GM12878 (cell line): ENCODE measurements at regions of chr12 and their contacts with region 1.

Region 1: DNA sequence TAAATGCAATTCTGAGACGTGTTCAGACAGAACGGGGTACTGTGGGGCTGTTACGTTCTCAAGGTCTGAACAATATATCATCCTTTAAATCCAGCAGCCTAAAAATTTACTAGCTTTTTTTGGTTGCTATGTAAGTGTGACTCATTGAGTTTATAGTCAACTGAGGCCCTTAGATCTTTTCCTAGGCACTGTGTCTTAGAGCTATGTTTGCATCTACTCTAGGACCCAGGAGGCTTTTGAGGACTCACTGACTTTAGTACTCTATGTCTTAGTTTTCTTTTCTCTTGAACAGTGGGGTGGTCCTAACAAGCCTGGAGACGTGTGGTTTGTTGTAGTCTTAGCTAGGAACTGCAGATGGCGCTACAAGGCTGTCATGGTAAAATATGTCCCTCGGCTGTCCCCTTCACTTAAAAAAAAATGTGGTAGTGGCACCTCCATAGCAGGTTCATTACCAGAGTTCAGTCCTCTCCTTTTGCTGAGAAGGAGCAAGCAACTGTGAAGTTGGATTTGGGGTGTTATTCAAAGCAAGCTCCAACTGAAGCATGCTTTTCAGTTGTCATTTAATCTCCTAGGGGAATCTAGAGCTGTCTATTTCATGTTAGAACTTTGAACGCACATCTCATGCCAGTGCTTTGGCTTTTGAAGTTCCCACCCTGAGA is 8.7 kb upstream of the SPATS2 start:
- DNase-seq: no peak
- ATAC-seq: peak; percentile 99
- H3K4me3 ChIP-seq: no peak overlapping the region
- H3K27ac ChIP-seq: no peak overlapping the region
- H3K4me1 ChIP-seq: no peaks in the 10 kb centered on the region
- H3K27me3 ChIP-seq: no peaks in the 10 kb centered on the region
- CTCF ChIP-seq: peak; percentile 81 to 91 (median 81)
- EP300 ChIP-seq: no peak
- POLR2A ChIP-seq: no peak
- RAD21 ChIP-seq: peak; percentile 98

Region 2: DNA sequence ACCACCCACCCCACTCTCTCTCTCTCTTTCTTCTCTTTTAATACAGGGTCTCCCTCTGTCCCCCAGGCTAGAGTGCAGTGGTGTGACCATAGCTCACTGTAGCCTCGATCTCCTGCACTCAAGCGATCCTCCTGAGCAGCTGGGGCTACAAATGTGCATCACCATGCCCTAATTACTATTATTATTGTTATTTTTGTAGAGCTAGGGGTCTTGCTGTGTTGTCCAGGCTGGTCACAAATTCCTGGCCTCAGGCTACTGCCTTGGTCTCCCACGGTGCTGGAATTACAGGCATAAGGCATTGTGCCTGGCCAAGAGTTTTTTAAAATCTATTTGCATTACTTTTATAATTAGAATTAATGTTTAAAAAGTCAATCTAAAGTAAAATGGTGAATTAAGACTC is 204.4 kb before region 1 on chr12:
- CTCF ChIA-PET with region 1: no interaction called
- POLR2A ChIA-PET with region 1: no interaction called
- RAD21 ChIA-PET with region 1: no interaction called
- SMC1A ChIA-PET with region 1: no interaction called
- in situ Hi-C with region 1: no loop called
- intact Hi-C with region 1: no loop called
- DNase-seq: no peak
- ATAC-seq: no peak
- H3K4me3 ChIP-seq: no peak overlapping the region
- H3K27ac ChIP-seq: no peak overlapping the region
- H3K4me1 ChIP-seq: no peaks in the 10 kb centered on the region
- H3K27me3 ChIP-seq: no peaks in the 10 kb centered on the region
- CTCF ChIP-seq: no peak
- EP300 ChIP-seq: no peak
- POLR2A ChIP-seq: no peak
- RAD21 ChIP-seq: no peak

Region 3: GRCh38 chr12:49304161-49304560 is 54.5 kb before region 1 on chr12:
- CTCF ChIA-PET with region 1: interaction called, 231 read pairs
- POLR2A ChIA-PET with region 1: no interaction called
- RAD21 ChIA-PET with region 1: no interaction called
- SMC1A ChIA-PET with region 1: interaction called, 5 read pairs
- in situ Hi-C with region 1: no loop called
- intact Hi-C with region 1: no loop called
- DNase-seq: no peak
- ATAC-seq: no peak
- H3K4me3 ChIP-seq: no peak overlapping the region
- H3K27ac ChIP-seq: no peak overlapping the region
- H3K4me1 ChIP-seq: no peaks in the 10 kb centered on the region
- H3K27me3 ChIP-seq: no peaks in the 10 kb centered on the region
- CTCF ChIP-seq: no peak
- EP300 ChIP-seq: no peak
- POLR2A ChIP-seq: no peak
- RAD21 ChIP-seq: no peak

Region 4: DNA sequence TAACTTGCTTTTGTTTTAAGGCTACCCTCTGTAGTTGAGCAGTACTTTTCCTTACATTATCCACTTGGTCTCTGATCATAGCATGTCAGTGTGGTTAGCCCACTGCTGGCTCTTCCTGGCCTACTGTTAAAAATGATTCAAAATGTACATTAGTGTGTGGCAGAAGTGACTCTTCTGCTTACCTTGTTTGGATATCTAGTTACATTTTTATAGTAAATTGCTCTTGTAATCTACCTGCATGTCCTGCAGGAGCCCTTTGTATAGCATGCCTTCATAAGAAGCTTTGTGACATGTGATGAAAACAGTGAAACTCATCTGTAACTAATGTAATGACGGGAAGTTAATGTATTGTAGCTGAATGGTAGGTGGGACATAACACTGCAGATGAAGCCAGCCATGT is 16.8 kb after region 1 on chr12:
- CTCF ChIA-PET with region 1: interaction called, 64 read pairs
- POLR2A ChIA-PET with region 1: no interaction called
- RAD21 ChIA-PET with region 1: interaction called, 26 read pairs
- SMC1A ChIA-PET with region 1: interaction called, 9 read pairs
- in situ Hi-C with region 1: no loop called
- intact Hi-C with region 1: no loop called
- DNase-seq: no peak
- ATAC-seq: peak; percentile 62
- H3K4me3 ChIP-seq: no peak overlapping the region
- H3K27ac ChIP-seq: no peak overlapping the region; the same call in 1 of the 2 replicates
- H3K4me1 ChIP-seq: peaks cover 12% of the 10 kb centered on the region
- H3K27me3 ChIP-seq: no peaks in the 10 kb centered on the region
- CTCF ChIP-seq: no peak
- EP300 ChIP-seq: no peak
- POLR2A ChIP-seq: no peak
- RAD21 ChIP-seq: no peak

Region 5: DNA sequence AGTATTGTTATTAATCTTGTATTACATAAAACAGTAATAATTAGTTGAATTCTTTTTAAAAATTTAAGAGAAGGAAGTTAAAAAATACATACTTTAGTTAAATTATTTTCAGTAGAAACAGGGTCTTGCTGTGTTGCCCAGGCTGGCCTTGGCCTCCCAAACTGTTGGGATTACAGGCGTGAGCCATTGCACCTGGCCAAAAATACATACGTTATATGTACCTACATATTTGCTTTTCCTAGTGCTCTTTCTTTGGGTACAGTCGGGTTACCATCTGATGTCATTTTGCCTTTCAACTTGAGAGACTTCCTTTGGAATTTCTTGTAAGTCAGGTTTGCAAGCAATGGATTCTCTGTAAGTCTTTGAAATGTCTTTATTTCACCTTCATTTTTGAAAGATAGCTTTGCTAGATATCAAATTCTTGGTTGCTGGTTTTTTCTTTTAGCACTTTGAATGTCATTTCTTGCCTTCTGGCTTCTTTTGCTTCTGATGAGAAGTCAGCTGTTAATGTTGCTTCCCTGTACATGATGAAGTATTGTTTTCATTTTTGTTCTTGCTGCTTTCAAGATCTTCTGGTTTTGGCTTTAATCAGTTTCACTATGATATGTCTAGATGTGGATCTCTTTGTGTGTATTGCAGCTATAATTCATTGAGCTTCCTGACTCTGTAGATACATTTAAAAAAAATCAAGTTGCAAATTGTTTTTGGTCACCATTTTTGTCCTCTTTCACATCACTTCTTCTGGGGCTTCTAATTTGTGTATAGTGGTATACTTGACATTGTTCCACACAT is 93.1 kb after region 1 on chr12:
- CTCF ChIA-PET with region 1: interaction called, 12 read pairs
- POLR2A ChIA-PET with region 1: no interaction called
- RAD21 ChIA-PET with region 1: interaction called, 4 read pairs
- SMC1A ChIA-PET with region 1: interaction called, 8 read pairs
- in situ Hi-C with region 1: no loop called
- intact Hi-C with region 1: no loop called
- DNase-seq: peak; percentile 62
- ATAC-seq: peak; percentile 96
- H3K4me3 ChIP-seq: no peak overlapping the region
- H3K27ac ChIP-seq: peak overlapping the region; percentile 74
- H3K4me1 ChIP-seq: peaks cover 18% of the 10 kb centered on the region
- H3K27me3 ChIP-seq: no peaks in the 10 kb centered on the region
- CTCF ChIP-seq: no peak
- EP300 ChIP-seq: no peak
- POLR2A ChIP-seq: no peak
- RAD21 ChIP-seq: no peak

Region 6: DNA sequence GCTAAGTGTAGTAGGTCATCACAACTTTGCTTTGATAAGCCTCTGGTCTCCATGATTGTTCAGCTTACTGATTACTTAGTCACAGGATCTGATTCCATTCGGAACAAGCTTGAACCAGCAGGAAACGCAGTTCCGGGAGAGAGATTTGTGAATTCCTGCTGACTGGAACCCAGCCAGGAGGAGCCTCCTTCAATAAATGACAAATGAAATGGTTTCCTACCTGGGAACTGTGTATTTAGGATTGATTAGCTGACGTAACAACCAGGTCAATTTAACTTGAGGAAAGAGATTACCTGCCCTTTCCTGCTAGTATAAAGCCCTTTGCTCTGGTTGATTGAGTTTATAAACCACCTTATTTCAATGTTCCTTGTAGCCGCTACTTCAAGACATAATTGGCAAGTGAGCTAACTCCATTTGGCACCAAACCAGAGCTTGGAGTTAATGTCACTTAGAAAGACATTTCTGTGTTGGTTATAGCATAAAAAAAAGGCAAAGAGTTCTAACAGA is 145.1 kb after region 1 on chr12:
- CTCF ChIA-PET with region 1: interaction called, 39 read pairs
- POLR2A ChIA-PET with region 1: no interaction called
- RAD21 ChIA-PET with region 1: interaction called, 258 read pairs
- SMC1A ChIA-PET with region 1: interaction called, 740 read pairs
- in situ Hi-C with region 1: no loop called
- intact Hi-C with region 1: no loop called
- DNase-seq: no peak
- ATAC-seq: no peak
- H3K4me3 ChIP-seq: no peak overlapping the region
- H3K27ac ChIP-seq: no peak overlapping the region
- H3K4me1 ChIP-seq: peaks cover 11% of the 10 kb centered on the region
- H3K27me3 ChIP-seq: no peaks in the 10 kb centered on the region
- CTCF ChIP-seq: no peak
- EP300 ChIP-seq: no peak
- POLR2A ChIP-seq: no peak
- RAD21 ChIP-seq: no peak

Region 7: DNA sequence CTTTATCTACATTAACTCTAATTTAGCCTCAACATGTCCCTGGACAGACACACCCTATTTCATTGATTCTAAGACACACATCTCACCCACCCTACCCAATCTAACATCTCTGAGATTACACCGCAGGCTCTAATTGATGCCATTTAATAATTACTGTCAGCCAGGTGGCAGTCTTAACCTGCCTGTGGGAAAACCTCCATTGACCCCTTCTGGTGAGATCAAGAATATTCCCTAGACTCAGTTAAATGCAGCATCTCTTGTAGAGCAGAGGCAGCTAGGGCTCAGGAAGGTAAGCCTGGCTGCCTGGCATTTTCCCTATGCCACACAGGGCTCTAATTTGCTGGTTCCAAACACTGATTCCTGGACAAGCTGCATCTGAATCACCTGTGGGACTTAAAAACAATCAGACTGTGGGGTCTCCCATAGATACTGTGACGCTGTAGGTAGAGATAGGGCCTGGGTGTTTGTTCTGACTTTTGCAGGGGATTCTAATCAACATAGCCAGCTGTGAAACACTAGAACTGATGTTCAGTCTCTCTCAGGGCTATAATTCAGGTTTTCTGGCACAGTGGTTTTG is 195.0 kb after region 1 on chr12:
- CTCF ChIA-PET with region 1: interaction called, 67 read pairs
- POLR2A ChIA-PET with region 1: no interaction called
- RAD21 ChIA-PET with region 1: interaction called, 25 read pairs
- SMC1A ChIA-PET with region 1: interaction called, 15 read pairs
- in situ Hi-C with region 1: no loop called
- intact Hi-C with region 1: no loop called
- DNase-seq: no peak
- ATAC-seq: peak; percentile 79
- H3K4me3 ChIP-seq: no peak overlapping the region
- H3K27ac ChIP-seq: no peak overlapping the region
- H3K4me1 ChIP-seq: no peaks in the 10 kb centered on the region
- H3K27me3 ChIP-seq: peaks cover 0 to 6% of the 10 kb centered on the region in 2 experiments; a peak in 2 of 4 replicates
- CTCF ChIP-seq: peak; percentile 57 to 89 (median 58); a peak in 5 of 6 replicates
- EP300 ChIP-seq: no peak
- POLR2A ChIP-seq: no peak
- RAD21 ChIP-seq: peak; percentile 73

Region 8: GRCh38 chr12:49662998-49663843 is 304.6 kb after region 1 on chr12:
- CTCF ChIA-PET with region 1: no interaction called
- POLR2A ChIA-PET with region 1: no interaction called
- RAD21 ChIA-PET with region 1: no interaction called
- SMC1A ChIA-PET with region 1: no interaction called
- in situ Hi-C with region 1: no loop called
- intact Hi-C with region 1: no loop called
- DNase-seq: peak; percentile 75
- ATAC-seq: peak; percentile 91
- H3K4me3 ChIP-seq: peak overlapping the region; percentile 39; the same call in 1 of the 2 replicates
- H3K27ac ChIP-seq: peak overlapping the region; percentile 86
- H3K4me1 ChIP-seq: peaks cover 58% of the 10 kb centered on the region
- H3K27me3 ChIP-seq: no peaks in the 10 kb centered on the region
- CTCF ChIP-seq: no peak
- EP300 ChIP-seq: peak; percentile 11 to 36; a peak in 2 of 4 replicates
- POLR2A ChIP-seq: peak; percentile 88
- RAD21 ChIP-seq: peak; percentile 23; the same call in 1 of the 2 replicates

Region 9: GRCh38 chr12:49683599-49684309 is 325.1 kb after region 1 on chr12:
- CTCF ChIA-PET with region 1: no interaction called
- POLR2A ChIA-PET with region 1: no interaction called
- RAD21 ChIA-PET with region 1: no interaction called
- SMC1A ChIA-PET with region 1: no interaction called
- in situ Hi-C with region 1: no loop called
- intact Hi-C with region 1: no loop called
- DNase-seq: no peak
- ATAC-seq: peak; percentile 48
- H3K4me3 ChIP-seq: no peak overlapping the region
- H3K27ac ChIP-seq: no peak overlapping the region
- H3K4me1 ChIP-seq: peaks cover 33% of the 10 kb centered on the region
- H3K27me3 ChIP-seq: no peaks in the 10 kb centered on the region
- CTCF ChIP-seq: no peak
- EP300 ChIP-seq: no peak
- POLR2A ChIP-seq: no peak
- RAD21 ChIP-seq: no peak